CD14-positive monocyte (primary cell): ENCODE measurements at regions of chr22 and their contacts with region 1.

Region 1: DNA sequence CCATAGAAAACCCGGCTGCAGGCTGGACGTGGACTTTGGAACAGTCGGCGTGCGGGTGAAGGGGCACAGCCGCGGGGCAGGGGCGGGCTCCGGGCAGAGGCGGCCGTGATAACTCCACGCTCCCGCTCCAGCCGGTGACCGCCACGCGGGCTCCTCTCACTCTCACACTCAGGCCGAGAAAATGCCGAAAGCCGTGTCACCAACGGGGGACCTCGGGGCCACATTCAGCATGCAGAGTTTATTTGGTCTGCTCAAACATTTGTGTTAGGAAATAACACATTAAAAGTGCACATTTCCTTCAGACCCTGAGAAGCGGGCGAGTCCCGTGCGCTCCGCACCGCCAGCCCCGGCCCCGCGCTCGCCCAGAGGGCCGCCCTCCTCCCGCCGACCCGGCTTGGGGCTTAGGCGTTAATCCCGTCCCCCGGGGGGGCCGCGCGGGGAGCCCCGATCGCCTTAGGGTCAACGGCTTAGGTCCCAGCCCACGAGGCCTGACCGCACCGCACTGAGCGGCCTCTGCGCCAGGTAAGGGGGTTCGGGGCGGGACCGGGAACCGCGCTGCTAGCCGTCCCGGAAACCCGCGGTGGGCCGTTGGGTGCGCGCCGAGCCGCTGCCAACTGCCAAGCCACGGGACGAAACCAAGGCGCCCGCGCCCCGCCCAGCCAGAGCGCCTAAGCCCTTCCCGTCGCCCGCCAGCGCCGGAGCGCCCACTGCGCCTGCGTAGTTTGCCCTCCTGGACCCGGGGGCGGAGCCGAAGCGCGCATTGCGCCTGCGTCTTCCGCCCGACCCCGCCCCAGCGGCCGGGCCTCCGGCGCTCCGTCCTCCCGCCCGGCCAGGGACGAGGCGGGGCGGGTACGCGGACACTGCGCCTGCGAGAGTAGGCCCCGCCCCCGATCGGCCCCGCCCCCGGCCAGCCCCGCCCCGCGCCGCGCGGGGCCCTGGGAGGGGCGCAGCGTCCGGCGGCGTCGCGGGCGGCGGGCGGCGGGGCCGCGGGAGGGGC is at the start of gene ZBED4:
- DNase-seq: peak; percentile 95 to 98 (median 97)
- H3K4me3 ChIP-seq: peak within 1 kb of the TSS; percentile 64 to 87 (median 78)
- H3K4me3 Mint-ChIP-seq: peak within 1 kb of the TSS; percentile 96 to 97
- H3K27ac ChIP-seq: peak within 1 kb of the TSS; percentile 67 to 91
- H3K27ac Mint-ChIP-seq: peak within 1 kb of the TSS; percentile 87 to 95 (median 90)
- H3K4me1 ChIP-seq: peaks cover 33 to 50% of the 10 kb centered on the region in 2 donors
- H3K4me1 Mint-ChIP-seq: peaks cover 46% of the 10 kb centered on the region
- H3K27me3 ChIP-seq: no peaks in the 10 kb centered on the region
- H3K27me3 Mint-ChIP-seq: peaks cover 0 to 13% (median 7%) of the 10 kb centered on the region in 3 donors
- CTCF ChIP-seq: no peak
- polyA plus RNA-seq, gene ZBED4: 3.8 to 8.2 (median 5.7) TPM

Region 2: GRCh38 chr22:49753961-49754695 is 99.1 kb before region 1 on chr22:
- intact Hi-C with region 1: no loop called
- DNase-seq: no peak
- H3K4me3 ChIP-seq: no peak overlapping the region
- H3K4me3 Mint-ChIP-seq: no peak overlapping the region
- H3K27ac ChIP-seq: no peak overlapping the region
- H3K27ac Mint-ChIP-seq: peak overlapping the region in 1 of 7 donors; percentile 68
- H3K4me1 ChIP-seq: no peaks in the 10 kb centered on the region
- H3K4me1 Mint-ChIP-seq: no peaks in the 10 kb centered on the region
- H3K27me3 ChIP-seq: no peaks in the 10 kb centered on the region
- H3K27me3 Mint-ChIP-seq: peaks cover 0 to 4% (median 2%) of the 10 kb centered on the region in 3 donors
- CTCF ChIP-seq: no peak

Region 3: DNA sequence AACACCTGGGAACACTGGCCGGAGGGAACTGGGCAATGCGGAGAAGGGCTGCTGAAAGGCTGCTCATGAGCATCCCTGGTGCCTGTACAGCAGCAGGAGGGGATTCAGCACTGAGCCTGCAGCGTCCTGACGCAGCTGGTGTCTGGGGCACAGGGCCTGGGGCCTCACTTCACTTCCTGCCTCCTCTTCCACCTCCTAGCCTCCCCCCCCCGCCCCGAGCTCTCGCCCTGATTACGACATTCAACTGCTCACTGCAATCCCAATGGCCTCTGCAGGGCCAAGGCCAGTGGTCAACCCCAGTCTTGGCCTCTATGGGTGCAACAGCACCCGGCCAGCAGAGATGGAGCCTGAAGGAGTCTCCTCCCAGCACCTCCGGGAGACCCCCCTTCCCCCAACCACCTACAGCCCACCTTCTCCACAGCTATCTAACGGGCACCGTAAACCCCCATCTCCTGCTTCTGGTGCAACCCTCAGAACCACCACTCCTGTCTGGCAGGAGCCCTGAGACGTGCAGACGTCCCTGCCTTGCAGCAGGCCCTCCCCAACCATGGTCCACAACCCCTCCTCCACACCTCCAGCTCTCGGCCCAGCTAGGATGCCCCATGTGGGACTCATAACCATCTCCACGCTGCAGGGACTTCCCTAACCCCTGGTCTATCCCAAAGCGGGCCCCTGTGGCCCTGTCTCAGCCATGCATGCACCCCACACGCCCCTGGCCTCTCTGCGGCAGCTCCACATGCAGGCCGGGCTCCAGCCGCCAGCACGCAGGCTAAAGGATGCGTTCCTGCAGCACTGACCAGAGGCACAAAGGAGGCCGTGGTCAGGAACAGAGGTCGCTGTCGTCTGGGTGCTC is 63.7 kb before region 1 on chr22:
- intact Hi-C with region 1: loop called in 1 of 2 experiments (anchors 2 kb)
- DNase-seq: peak; percentile 60 to 72 (median 69)
- H3K4me3 ChIP-seq: peak overlapping the region in 1 of 3 experiments; percentile 49
- H3K4me3 Mint-ChIP-seq: peak overlapping the region; percentile 72 to 87
- H3K27ac ChIP-seq: peak overlapping the region; percentile 74 to 77
- H3K27ac Mint-ChIP-seq: peak overlapping the region; percentile 68 to 93 (median 88)
- H3K4me1 ChIP-seq: peaks cover 27 to 31% of the 10 kb centered on the region in 2 donors
- H3K4me1 Mint-ChIP-seq: peaks cover 29% of the 10 kb centered on the region
- H3K27me3 ChIP-seq: no peaks in the 10 kb centered on the region
- H3K27me3 Mint-ChIP-seq: peaks cover 0 to 2% (median 0%) of the 10 kb centered on the region in 3 donors
- CTCF ChIP-seq: no peak

Region 4: GRCh38 chr22:49894322-49895054 is 41.3 kb after region 1 on chr22:
- intact Hi-C with region 1: no loop called
- DNase-seq: no peak
- H3K4me3 ChIP-seq: no peak overlapping the region
- H3K4me3 Mint-ChIP-seq: no peak overlapping the region
- H3K27ac ChIP-seq: no peak overlapping the region
- H3K27ac Mint-ChIP-seq: peak overlapping the region in 2 of 7 donors; percentile 11 to 46
- H3K4me1 ChIP-seq: no peaks in the 10 kb centered on the region
- H3K4me1 Mint-ChIP-seq: no peaks in the 10 kb centered on the region
- H3K27me3 ChIP-seq: no peaks in the 10 kb centered on the region
- H3K27me3 Mint-ChIP-seq: no peaks in the 10 kb centered on the region
- CTCF ChIP-seq: no peak